GM12878 (cell line): ENCODE measurements at regions of chr3 and their contacts with region 1.

Region 1: GRCh38 chr3:28012830-28013229 is 228.6 kb upstream of the CMC1 start:
- DNase-seq: no peak
- ATAC-seq: no peak
- H3K4me3 ChIP-seq: no peak overlapping the region
- H3K27ac ChIP-seq: no peak overlapping the region
- H3K4me1 ChIP-seq: no peaks in the 10 kb centered on the region
- H3K27me3 ChIP-seq: no peaks in the 10 kb centered on the region
- CTCF ChIP-seq: no peak
- EP300 ChIP-seq: no peak
- POLR2A ChIP-seq: no peak
- RAD21 ChIP-seq: no peak

Region 2: GRCh38 chr3:27960133-27960532 is 52.7 kb before region 1 on chr3:
- CTCF ChIA-PET with region 1: no interaction called
- POLR2A ChIA-PET with region 1: no interaction called
- RAD21 ChIA-PET with region 1: no interaction called
- SMC1A ChIA-PET with region 1: interaction called, 13 read pairs
- in situ Hi-C with region 1: no loop called
- intact Hi-C with region 1: no loop called
- DNase-seq: no peak
- ATAC-seq: peak; percentile 35
- H3K4me3 ChIP-seq: no peak overlapping the region
- H3K27ac ChIP-seq: no peak overlapping the region
- H3K4me1 ChIP-seq: no peaks in the 10 kb centered on the region
- H3K27me3 ChIP-seq: no peaks in the 10 kb centered on the region
- CTCF ChIP-seq: no peak
- EP300 ChIP-seq: no peak
- POLR2A ChIP-seq: no peak
- RAD21 ChIP-seq: no peak

Region 3: GRCh38 chr3:28036599-28037575 is 24.1 kb after region 1 on chr3:
- CTCF ChIA-PET with region 1: interaction called, 12 read pairs
- POLR2A ChIA-PET with region 1: interaction called, 13 read pairs
- RAD21 ChIA-PET with region 1: interaction called, 221 read pairs
- SMC1A ChIA-PET with region 1: interaction called, 296 read pairs
- in situ Hi-C with region 1: no loop called
- intact Hi-C with region 1: loop called (anchors 2 kb)
- DNase-seq: no peak
- ATAC-seq: peak; percentile 83
- H3K4me3 ChIP-seq: no peak overlapping the region
- H3K27ac ChIP-seq: no peak overlapping the region
- H3K4me1 ChIP-seq: no peaks in the 10 kb centered on the region
- H3K27me3 ChIP-seq: no peaks in the 10 kb centered on the region
- CTCF ChIP-seq: no peak
- EP300 ChIP-seq: peak in 1 of 2 experiments; percentile 34; a peak in 1 of 4 replicates
- POLR2A ChIP-seq: no peak
- RAD21 ChIP-seq: no peak

Region 4: DNA sequence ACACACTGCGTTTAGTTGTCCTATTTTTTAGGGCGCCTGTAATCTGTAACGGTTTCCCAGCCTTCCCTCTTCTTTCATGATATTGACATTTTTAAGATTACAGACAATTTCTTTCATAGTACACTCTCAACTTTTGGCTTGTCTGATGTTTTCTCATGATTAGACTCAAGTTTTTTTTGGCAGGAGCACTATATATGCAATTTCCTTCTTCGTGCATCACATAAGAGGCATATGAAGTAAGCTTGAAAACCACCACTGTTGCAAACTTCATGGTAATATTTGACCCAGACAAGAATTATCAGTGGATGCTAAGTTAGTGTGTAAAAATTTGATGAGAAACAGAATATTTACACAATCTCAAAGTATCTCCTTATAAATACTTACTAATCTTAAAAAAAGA is 109.4 kb after region 1 on chr3:
- CTCF ChIA-PET with region 1: interaction called, 3 read pairs
- POLR2A ChIA-PET with region 1: interaction called, 6 read pairs
- RAD21 ChIA-PET with region 1: interaction called, 248 read pairs
- SMC1A ChIA-PET with region 1: interaction called, 23 read pairs
- in situ Hi-C with region 1: no loop called
- intact Hi-C with region 1: no loop called
- DNase-seq: no peak
- ATAC-seq: no peak
- H3K4me3 ChIP-seq: no peak overlapping the region
- H3K27ac ChIP-seq: no peak overlapping the region
- H3K4me1 ChIP-seq: no peaks in the 10 kb centered on the region
- H3K27me3 ChIP-seq: no peaks in the 10 kb centered on the region
- CTCF ChIP-seq: no peak
- EP300 ChIP-seq: no peak
- POLR2A ChIP-seq: no peak
- RAD21 ChIP-seq: no peak

Region 5: GRCh38 chr3:28151608-28152228 is 138.9 kb after region 1 on chr3:
- CTCF ChIA-PET with region 1: no interaction called
- POLR2A ChIA-PET with region 1: interaction called, 3 read pairs
- RAD21 ChIA-PET with region 1: no interaction called
- SMC1A ChIA-PET with region 1: interaction called, 17 read pairs
- in situ Hi-C with region 1: no loop called
- intact Hi-C with region 1: no loop called
- DNase-seq: peak; percentile 33
- ATAC-seq: peak; percentile 95
- H3K4me3 ChIP-seq: no peak overlapping the region
- H3K27ac ChIP-seq: no peak overlapping the region
- H3K4me1 ChIP-seq: no peaks in the 10 kb centered on the region
- H3K27me3 ChIP-seq: no peaks in the 10 kb centered on the region
- CTCF ChIP-seq: no peak
- EP300 ChIP-seq: no peak
- POLR2A ChIP-seq: no peak
- RAD21 ChIP-seq: no peak

Region 6: GRCh38 chr3:28295898-28296490 is 283.2 kb after region 1 on chr3:
- CTCF ChIA-PET with region 1: no interaction called
- POLR2A ChIA-PET with region 1: no interaction called
- RAD21 ChIA-PET with region 1: no interaction called
- SMC1A ChIA-PET with region 1: no interaction called
- in situ Hi-C with region 1: no loop called
- intact Hi-C with region 1: no loop called
- DNase-seq: no peak
- ATAC-seq: peak; percentile 62
- H3K4me3 ChIP-seq: no peak overlapping the region
- H3K27ac ChIP-seq: no peak overlapping the region; the same call in 1 of the 2 replicates
- H3K4me1 ChIP-seq: no peaks in the 10 kb centered on the region
- H3K27me3 ChIP-seq: no peaks in the 10 kb centered on the region
- CTCF ChIP-seq: no peak
- EP300 ChIP-seq: no peak
- POLR2A ChIP-seq: no peak
- RAD21 ChIP-seq: no peak